IMR-90 (cell line): ENCODE measurements at regions of chr11 and their contacts with region 1.

Region 1: DNA sequence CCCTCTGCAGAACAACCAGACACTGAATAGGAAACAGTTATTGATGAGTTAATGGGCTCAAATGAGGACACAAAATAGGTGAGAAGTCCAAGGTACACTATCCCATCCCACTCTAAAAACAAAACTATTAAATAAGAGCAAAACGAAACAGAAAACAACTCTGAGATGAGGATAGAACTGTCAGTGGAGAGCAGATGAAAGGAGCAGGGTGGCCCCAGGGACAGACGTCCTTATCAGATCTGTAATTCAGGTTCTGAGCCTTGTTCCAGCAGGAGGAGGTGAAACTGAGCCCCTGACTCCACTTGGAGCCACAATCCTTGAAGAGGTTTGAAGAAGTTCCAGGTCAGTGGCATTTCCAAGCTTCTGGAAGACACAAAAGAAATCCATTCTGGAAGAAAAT is 8.5 kb upstream of the SNX19 start:
- DNase-seq: no peak
- ATAC-seq: peak; percentile 12; the same call in 1 of the 2 replicates
- H3K4me3 ChIP-seq: no peak overlapping the region
- H3K27ac ChIP-seq: no peak overlapping the region
- H3K4me1 ChIP-seq: no peaks in the 10 kb centered on the region
- H3K27me3 ChIP-seq: no peaks in the 10 kb centered on the region
- CTCF ChIP-seq: no peak
- POLR2A ChIP-seq: no peak
- RAD21 ChIP-seq: no peak

Region 2: GRCh38 chr11:130979386-130979972 is 54.7 kb after region 1 on chr11:
- CTCF ChIA-PET with region 1: interaction called, 7 read pairs
- POLR2A ChIA-PET with region 1: no interaction called
- dilution Hi-C with region 1: no loop called
- in situ Hi-C with region 1: loop called (anchors 5 kb)
- intact Hi-C with region 1: loop called (anchors 1 kb)
- DNase-seq: peak; percentile 61
- ATAC-seq: peak; percentile 89
- H3K4me3 ChIP-seq: no peak overlapping the region
- H3K27ac ChIP-seq: no peak overlapping the region
- H3K4me1 ChIP-seq: no peaks in the 10 kb centered on the region
- H3K27me3 ChIP-seq: no peaks in the 10 kb centered on the region; the same call in none of the 2 replicates
- CTCF ChIP-seq: peak; percentile 66
- POLR2A ChIP-seq: no peak
- RAD21 ChIP-seq: peak; percentile 64

Region 3: GRCh38 chr11:131041331-131042040 is 116.7 kb after region 1 on chr11:
- CTCF ChIA-PET with region 1: no interaction called
- POLR2A ChIA-PET with region 1: no interaction called
- dilution Hi-C with region 1: no loop called
- in situ Hi-C with region 1: no loop called
- intact Hi-C with region 1: loop called (anchors 5 kb)
- DNase-seq: no peak
- ATAC-seq: no peak
- H3K4me3 ChIP-seq: no peak overlapping the region
- H3K27ac ChIP-seq: no peak overlapping the region
- H3K4me1 ChIP-seq: no peaks in the 10 kb centered on the region; the same call in 1 of the 2 replicates
- H3K27me3 ChIP-seq: peaks cover 4% of the 10 kb centered on the region; the same call in 1 of the 2 replicates
- CTCF ChIP-seq: no peak
- POLR2A ChIP-seq: no peak
- RAD21 ChIP-seq: no peak

Region 4: DNA sequence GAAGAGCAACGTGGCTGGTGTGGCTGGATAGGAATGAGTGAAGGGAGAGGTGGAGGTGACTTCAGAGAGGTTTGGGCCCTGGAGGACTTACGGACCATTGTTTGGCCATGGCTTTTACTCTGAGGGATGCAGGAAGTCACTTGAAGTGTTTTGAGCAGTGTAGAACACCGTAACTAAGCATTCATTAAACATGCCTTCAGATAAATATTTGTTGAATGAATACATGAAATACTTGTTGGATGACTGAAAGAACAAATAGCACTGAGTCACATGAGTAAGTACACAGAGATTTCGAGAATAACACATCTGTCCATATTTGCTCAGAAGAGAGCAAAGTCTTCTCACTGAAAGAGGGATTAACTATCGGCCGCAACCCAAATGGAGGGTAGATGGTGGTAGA is 174.2 kb after region 1 on chr11:
- CTCF ChIA-PET with region 1: no interaction called
- POLR2A ChIA-PET with region 1: no interaction called
- dilution Hi-C with region 1: no loop called
- in situ Hi-C with region 1: no loop called
- intact Hi-C with region 1: no loop called
- DNase-seq: peak; percentile 77
- ATAC-seq: peak; percentile 77
- H3K4me3 ChIP-seq: no peak overlapping the region
- H3K27ac ChIP-seq: peak overlapping the region; percentile 30
- H3K4me1 ChIP-seq: peaks cover 11% of the 10 kb centered on the region
- H3K27me3 ChIP-seq: no peaks in the 10 kb centered on the region
- CTCF ChIP-seq: no peak
- POLR2A ChIP-seq: no peak
- RAD21 ChIP-seq: no peak

Region 5: GRCh38 chr11:131217313-131218310 is 292.8 kb after region 1 on chr11:
- CTCF ChIA-PET with region 1: no interaction called
- POLR2A ChIA-PET with region 1: no interaction called
- dilution Hi-C with region 1: no loop called
- in situ Hi-C with region 1: no loop called
- intact Hi-C with region 1: loop called (anchors 5 kb)
- DNase-seq: peak; percentile 21
- ATAC-seq: peak; percentile 79
- H3K4me3 ChIP-seq: no peak overlapping the region
- H3K27ac ChIP-seq: no peak overlapping the region
- H3K4me1 ChIP-seq: no peaks in the 10 kb centered on the region
- H3K27me3 ChIP-seq: peaks cover 8% of the 10 kb centered on the region
- CTCF ChIP-seq: peak; percentile 61
- POLR2A ChIP-seq: no peak
- RAD21 ChIP-seq: peak; percentile 71